Activated CD4-positive, alpha-beta T cell treated with anti-CD3 and anti-CD28 coated beads for 36 hours (primary cell): ENCODE measurements at regions of chr3 and their contacts with region 1.

Region 1: DNA sequence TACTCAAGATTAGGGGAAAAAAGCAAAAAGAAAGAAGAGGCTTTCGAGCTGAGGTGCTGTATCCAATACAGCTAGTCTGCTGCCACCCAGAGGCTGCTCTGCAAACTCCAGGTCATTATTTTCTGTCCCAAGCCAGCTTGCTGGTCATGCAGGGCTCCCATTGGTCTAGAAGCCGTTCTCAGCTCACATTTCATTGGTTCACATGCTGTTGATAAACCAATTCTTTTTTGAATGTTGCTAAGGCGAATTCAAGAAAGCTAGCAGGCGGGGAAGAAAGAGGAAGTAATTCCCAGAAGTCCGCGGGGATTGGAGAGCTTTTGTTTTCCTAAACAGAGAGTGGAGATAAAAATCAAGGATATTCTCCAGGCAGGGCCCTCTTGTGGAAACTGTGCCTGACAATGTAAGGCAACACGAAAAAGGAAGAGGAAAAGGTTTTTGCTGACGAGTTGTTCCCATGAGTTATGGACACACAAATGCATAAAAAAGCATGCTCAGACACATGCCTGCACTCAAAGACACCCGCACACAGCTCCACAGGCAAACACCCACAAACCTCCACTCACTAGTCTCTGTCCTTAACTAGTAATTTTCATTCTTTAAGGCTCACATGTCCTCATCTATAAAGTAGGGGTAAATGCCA is 33.4 kb downstream of the FSTL1 start:
- DNase-seq: peak; percentile 93
- ATAC-seq: peak; percentile 99
- H3K4me3 Mint-ChIP-seq: peak overlapping the region; percentile 73
- H3K27ac Mint-ChIP-seq: peak overlapping the region; percentile 52
- H3K4me1 Mint-ChIP-seq: peaks cover 11% of the 10 kb centered on the region
- H3K27me3 Mint-ChIP-seq: peaks cover 4% of the 10 kb centered on the region

Region 2: GRCh38 chr3:119891944-119892721 is 525.3 kb before region 1 on chr3:
- CTCF ChIA-PET with region 1: interaction called, 14 read pairs
- POLR2A ChIA-PET with region 1: no interaction called
- intact Hi-C with region 1: loop called (anchors 1 kb)
- DNase-seq: peak; percentile 52
- ATAC-seq: peak; percentile 80
- H3K4me3 Mint-ChIP-seq: no peak overlapping the region
- H3K27ac Mint-ChIP-seq: no peak overlapping the region
- H3K4me1 Mint-ChIP-seq: peaks cover 19% of the 10 kb centered on the region
- H3K27me3 Mint-ChIP-seq: no peaks in the 10 kb centered on the region

Region 3: GRCh38 chr3:120245386-120245785 is 172.0 kb before region 1 on chr3:
- CTCF ChIA-PET with region 1: interaction called, 131 read pairs
- POLR2A ChIA-PET with region 1: no interaction called
- intact Hi-C with region 1: loop called (anchors 1 kb)
- DNase-seq: no peak
- ATAC-seq: no peak
- H3K4me3 Mint-ChIP-seq: no peak overlapping the region
- H3K27ac Mint-ChIP-seq: no peak overlapping the region
- H3K4me1 Mint-ChIP-seq: no peaks in the 10 kb centered on the region
- H3K27me3 Mint-ChIP-seq: peaks cover 12% of the 10 kb centered on the region

Region 4: DNA sequence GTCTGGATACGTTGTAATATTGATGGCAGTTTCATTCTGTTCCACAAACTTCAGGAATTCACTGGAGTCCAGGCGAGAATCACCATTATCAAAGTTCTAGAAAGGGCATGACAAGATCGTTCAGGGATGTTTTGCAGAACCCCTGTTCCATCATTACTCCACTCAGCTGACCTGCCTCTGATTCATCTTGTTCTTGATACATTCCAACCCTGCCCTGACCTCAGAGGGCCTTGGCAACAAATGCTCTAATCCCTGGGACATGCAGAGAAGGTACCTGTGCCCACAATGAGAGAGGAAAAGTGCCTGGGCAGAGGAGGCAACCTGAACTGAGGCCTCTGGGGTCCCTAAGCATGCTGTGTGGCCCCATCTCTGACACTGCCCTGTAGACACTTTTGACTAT is 12.5 kb before region 1 on chr3:
- CTCF ChIA-PET with region 1: interaction called, 24 read pairs
- POLR2A ChIA-PET with region 1: interaction called, 3 read pairs
- intact Hi-C with region 1: no loop called
- DNase-seq: no peak
- ATAC-seq: no peak
- H3K4me3 Mint-ChIP-seq: no peak overlapping the region
- H3K27ac Mint-ChIP-seq: no peak overlapping the region
- H3K4me1 Mint-ChIP-seq: no peaks in the 10 kb centered on the region
- H3K27me3 Mint-ChIP-seq: no peaks in the 10 kb centered on the region

Region 5: GRCh38 chr3:120526011-120526870 is 108.8 kb after region 1 on chr3:
- CTCF ChIA-PET with region 1: no interaction called
- POLR2A ChIA-PET with region 1: no interaction called
- intact Hi-C with region 1: no loop called
- DNase-seq: no peak
- ATAC-seq: no peak
- H3K4me3 Mint-ChIP-seq: no peak overlapping the region
- H3K27ac Mint-ChIP-seq: no peak overlapping the region
- H3K4me1 Mint-ChIP-seq: peaks cover 5% of the 10 kb centered on the region
- H3K27me3 Mint-ChIP-seq: peaks cover 15% of the 10 kb centered on the region

Region 6: GRCh38 chr3:120558771-120559241 is 141.4 kb after region 1 on chr3:
- CTCF ChIA-PET with region 1: interaction called, 21 read pairs
- POLR2A ChIA-PET with region 1: no interaction called
- intact Hi-C with region 1: loop called (anchors 1 kb)
- DNase-seq: peak; percentile 93
- ATAC-seq: peak; percentile 68
- H3K4me3 Mint-ChIP-seq: peak overlapping the region; percentile 56
- H3K27ac Mint-ChIP-seq: peak overlapping the region; percentile 10
- H3K4me1 Mint-ChIP-seq: peaks cover 12% of the 10 kb centered on the region
- H3K27me3 Mint-ChIP-seq: peaks cover 6% of the 10 kb centered on the region